Ascending aorta (tissue), 2 donors: ENCODE measurements at regions of chr1 and their contacts with region 1.

Region 1: DNA sequence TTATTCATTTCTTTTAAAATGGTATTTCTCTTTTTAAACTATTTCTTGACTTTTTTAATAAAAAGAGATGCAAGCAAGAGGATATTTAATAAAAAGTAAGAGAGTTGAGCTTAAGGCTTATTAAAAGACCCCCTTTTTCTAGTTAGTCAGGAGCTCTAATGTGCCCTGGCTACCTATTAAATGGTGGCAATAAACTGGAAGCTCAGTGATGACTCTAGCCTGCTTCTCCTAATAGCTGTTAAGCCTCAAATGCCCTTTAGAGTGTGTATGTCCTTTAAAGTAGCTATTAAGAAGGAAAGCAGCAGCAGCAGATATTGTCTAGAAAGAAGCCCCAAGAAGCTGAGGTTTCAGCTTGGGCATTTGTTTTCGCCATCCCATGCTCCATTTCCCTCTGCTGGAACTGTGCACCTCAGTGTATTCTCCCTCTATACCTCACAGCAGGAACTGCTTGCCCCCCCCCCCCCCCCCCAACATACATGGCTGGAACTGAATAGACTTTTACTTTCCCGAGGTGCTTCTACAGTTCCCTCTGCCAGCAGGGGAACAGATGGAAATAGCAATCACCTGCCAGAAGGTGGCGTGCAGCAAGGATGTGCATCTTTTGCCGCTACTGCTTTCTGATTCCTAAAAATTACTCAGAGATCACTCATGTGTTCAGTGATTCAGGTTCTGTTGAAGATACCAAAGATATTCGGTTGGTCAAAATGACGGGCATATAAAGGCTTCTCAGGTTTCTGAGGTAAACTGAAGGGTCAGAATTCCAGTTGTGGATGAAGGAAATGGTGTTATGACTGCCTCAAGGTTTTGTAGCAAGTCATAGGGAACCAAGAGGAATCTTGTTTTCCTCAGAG is 2.5 kb downstream of the RGS4 start:
- DNase-seq: peak; percentile 11 to 86
- H3K4me3 ChIP-seq: peak overlapping the region; percentile 44 to 69
- H3K27ac ChIP-seq: peak overlapping the region; percentile 54 to 69
- H3K4me1 ChIP-seq: peaks cover 0 to 16% of the 10 kb centered on the region in 2 donors
- H3K27me3 ChIP-seq: no peaks in the 10 kb centered on the region
- CTCF ChIP-seq: peak; percentile 49 to 66 (median 65)

Region 2: GRCh38 chr1:162404550-162405160 is 667.0 kb before region 1 on chr1:
- intact Hi-C with region 1: no loop called
- DNase-seq: no peak
- H3K4me3 ChIP-seq: no peak overlapping the region
- H3K27ac ChIP-seq: no peak overlapping the region
- H3K4me1 ChIP-seq: no peaks in the 10 kb centered on the region
- H3K27me3 ChIP-seq: no peaks in the 10 kb centered on the region
- CTCF ChIP-seq: no peak

Region 3: GRCh38 chr1:162854245-162854882 is 217.3 kb before region 1 on chr1:
- intact Hi-C with region 1: loop called (anchors 2 kb)
- DNase-seq: peak in 1 of 2 donors; percentile 84
- H3K4me3 ChIP-seq: no peak overlapping the region
- H3K27ac ChIP-seq: peak overlapping the region; percentile 75 to 89
- H3K4me1 ChIP-seq: peaks cover 0 to 31% of the 10 kb centered on the region in 2 donors
- H3K27me3 ChIP-seq: no peaks in the 10 kb centered on the region
- CTCF ChIP-seq: peak; percentile 42 to 79 (median 68)

Region 4: DNA sequence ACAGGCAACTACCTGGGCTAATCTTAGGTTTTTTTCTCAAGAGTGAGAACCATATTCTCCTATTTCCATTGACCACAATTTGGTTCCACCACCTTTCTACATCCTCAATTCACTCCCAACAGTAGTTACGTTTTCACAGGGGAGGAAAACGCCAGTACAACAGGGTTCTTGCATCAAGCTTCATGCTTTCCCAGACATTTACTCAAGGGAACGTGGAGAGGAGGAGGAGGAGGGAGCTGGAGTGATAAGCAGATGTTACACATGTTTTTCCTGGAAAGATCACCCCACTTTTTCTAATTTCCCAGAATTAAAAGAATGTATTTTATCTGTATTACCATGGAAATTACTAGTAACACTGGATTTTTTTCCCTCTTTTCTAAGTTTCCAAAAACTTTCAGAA is 72.8 kb after region 1 on chr1:
- intact Hi-C with region 1: no loop called
- DNase-seq: no peak
- H3K4me3 ChIP-seq: no peak overlapping the region
- H3K27ac ChIP-seq: peak overlapping the region; percentile 41 to 50
- H3K4me1 ChIP-seq: peaks cover 0 to 5% of the 10 kb centered on the region in 2 donors
- H3K27me3 ChIP-seq: no peaks in the 10 kb centered on the region
- CTCF ChIP-seq: no peak

Region 5: DNA sequence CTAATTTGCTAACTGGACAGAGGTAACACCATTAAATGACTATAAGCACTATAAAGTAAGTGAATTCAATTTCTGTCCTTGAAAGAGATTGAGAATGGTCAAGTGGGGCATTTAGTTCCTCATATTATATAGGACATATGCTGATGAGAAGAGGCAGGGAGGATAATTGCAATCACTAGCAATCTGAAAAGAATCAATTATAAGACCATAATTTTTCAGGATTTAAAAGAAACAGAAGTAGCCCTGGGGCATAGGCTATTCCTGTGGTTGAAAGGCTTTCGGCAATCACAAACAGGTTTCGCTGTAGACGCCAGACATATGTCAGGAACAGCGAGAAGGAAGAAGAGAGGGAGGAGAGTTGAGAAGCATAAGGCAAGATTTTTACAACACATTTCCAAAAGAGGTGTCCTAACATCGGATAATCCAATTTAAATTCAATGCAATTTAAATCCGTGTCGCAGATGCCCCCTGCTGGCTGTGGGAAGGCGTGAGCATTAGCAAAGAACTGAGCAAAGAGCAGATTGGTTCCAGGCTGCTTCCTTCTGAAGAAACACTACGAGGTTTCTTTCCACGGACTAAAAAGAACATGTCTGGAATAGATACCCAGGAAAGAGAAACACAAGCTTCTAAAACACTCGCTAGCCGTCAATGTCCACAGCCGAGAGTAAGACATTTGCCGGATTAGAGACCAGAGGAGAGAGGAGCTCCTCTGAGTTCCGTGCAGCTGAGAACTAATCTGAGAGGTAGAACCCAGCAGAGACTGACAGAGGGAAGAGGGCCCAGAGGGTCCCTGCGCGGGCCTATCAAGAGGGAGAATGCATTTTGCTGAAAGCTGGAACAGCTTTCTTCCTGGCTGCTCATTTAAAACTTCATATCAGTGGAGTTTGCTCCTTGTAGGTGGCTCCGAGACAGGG is 103.2 kb after region 1 on chr1:
- intact Hi-C with region 1: loop called (anchors 1 kb)
- DNase-seq: peak in 1 of 2 donors; percentile 82
- H3K4me3 ChIP-seq: peak overlapping the region; percentile 44 to 56
- H3K27ac ChIP-seq: peak overlapping the region; percentile 82 to 85
- H3K4me1 ChIP-seq: peaks cover 0 to 52% of the 10 kb centered on the region in 2 donors
- H3K27me3 ChIP-seq: no peaks in the 10 kb centered on the region
- CTCF ChIP-seq: peak; percentile 84 to 86 (median 84)

Region 6: DNA sequence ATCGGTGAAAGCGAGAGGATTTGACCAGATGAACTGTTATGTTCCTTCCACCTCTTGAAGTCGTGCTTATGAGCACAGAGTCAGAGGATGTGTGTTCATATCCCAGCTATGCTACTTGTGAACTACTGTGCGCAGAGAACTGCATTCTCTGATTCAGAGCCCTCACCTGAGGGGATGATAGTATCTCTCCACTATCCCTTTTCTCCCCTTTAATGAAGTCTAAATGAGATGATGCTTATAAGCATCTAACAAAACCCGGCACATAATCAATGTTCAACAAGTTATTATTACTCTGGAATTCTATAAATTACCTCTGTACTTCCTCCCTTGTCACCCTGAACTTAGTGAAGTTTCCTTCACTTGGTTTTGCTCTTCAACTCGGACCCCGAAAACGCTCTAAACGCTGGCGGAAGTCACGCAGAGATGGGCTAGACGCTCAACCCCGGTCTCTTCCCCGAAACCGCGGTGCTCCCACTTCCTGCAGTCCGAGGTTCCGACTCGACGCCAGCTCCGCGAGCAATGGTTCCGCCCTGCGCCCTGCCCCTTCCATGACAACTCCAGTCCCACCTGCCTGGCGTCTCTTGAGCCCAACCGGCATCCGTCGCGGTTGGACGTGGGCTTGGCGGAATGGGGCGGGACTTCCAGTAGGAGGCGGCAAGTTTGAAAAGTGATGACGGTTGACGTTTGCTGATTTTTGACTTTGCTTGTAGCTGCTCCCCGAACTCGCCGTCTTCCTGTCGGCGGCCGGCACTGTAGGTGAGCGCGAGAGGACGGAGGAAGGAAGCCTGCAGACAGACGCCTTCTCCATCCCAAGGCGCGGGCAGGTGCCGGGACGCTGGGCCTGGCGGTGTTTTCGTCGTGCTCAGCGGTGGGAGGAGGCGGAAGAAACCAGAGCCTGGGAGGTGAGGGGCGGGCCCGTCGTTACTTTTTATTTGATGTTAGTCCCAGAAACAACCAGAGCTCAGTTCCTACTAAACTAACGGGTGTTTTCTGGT is 250.0 kb after region 1 on chr1 and contains the start of gene NUF2:
- intact Hi-C with region 1: loop called (anchors 2 kb)
- DNase-seq: peak; percentile 88 to 99
- H3K4me3 ChIP-seq: peak within 1 kb of the TSS; percentile 62 to 67
- H3K27ac ChIP-seq: peak within 1 kb of the TSS; percentile 82 to 85
- H3K4me1 ChIP-seq: peaks cover 11% of the 10 kb centered on the region in 2 donors
- H3K27me3 ChIP-seq: no peaks in the 10 kb centered on the region
- CTCF ChIP-seq: no peak
- total RNA-seq, gene NUF2: not detected